WTC11 (cell line): ENCODE measurements at regions of chr3 and their contacts with region 1.

Region 1: GRCh38 chr3:123642182-123642956 is 57.5 kb upstream of the HACD2 start:
- DNase-seq: peak; percentile 92
- ATAC-seq: peak; percentile 99
- H3K4me3 Mint-ChIP-seq: no peak overlapping the region
- H3K27ac Mint-ChIP-seq: peak overlapping the region; percentile 84
- H3K4me1 Mint-ChIP-seq: peaks cover 33% of the 10 kb centered on the region
- H3K27me3 Mint-ChIP-seq: no peaks in the 10 kb centered on the region
- CTCF ChIP-seq: peak; percentile 90

Region 2: GRCh38 chr3:123571264-123571972 is 71.0 kb before region 1 on chr3:
- CTCF ChIA-PET with region 1: interaction called, 22 read pairs
- POLR2A ChIA-PET with region 1: no interaction called
- DNase-seq: peak; percentile 46
- ATAC-seq: peak; percentile 98
- H3K4me3 Mint-ChIP-seq: no peak overlapping the region
- H3K27ac Mint-ChIP-seq: peak overlapping the region; percentile 48; the same call in 1 of the 2 replicates
- H3K4me1 Mint-ChIP-seq: peaks cover 19% of the 10 kb centered on the region
- H3K27me3 Mint-ChIP-seq: no peaks in the 10 kb centered on the region
- CTCF ChIP-seq: no peak

Region 3: GRCh38 chr3:123618768-123619484 is 23.4 kb before region 1 on chr3:
- CTCF ChIA-PET with region 1: interaction called, 25 read pairs
- POLR2A ChIA-PET with region 1: no interaction called
- DNase-seq: no peak
- ATAC-seq: no peak
- H3K4me3 Mint-ChIP-seq: no peak overlapping the region
- H3K27ac Mint-ChIP-seq: no peak overlapping the region
- H3K4me1 Mint-ChIP-seq: peaks cover 25% of the 10 kb centered on the region
- H3K27me3 Mint-ChIP-seq: no peaks in the 10 kb centered on the region
- CTCF ChIP-seq: no peak

Region 4: GRCh38 chr3:123652346-123652984 is 10.1 kb after region 1 on chr3:
- CTCF ChIA-PET with region 1: interaction called, 108 read pairs
- POLR2A ChIA-PET with region 1: interaction called, 5 read pairs
- DNase-seq: peak; percentile 89
- ATAC-seq: peak; percentile 96
- H3K4me3 Mint-ChIP-seq: no peak overlapping the region
- H3K27ac Mint-ChIP-seq: 0 out of 2 replicates have a peak overlapping the region, but pooled peaks have one; percentile 14
- H3K4me1 Mint-ChIP-seq: peaks cover 19% of the 10 kb centered on the region
- H3K27me3 Mint-ChIP-seq: no peaks in the 10 kb centered on the region; the same call in 1 of the 2 replicates
- CTCF ChIP-seq: peak; percentile 66

Region 5: GRCh38 chr3:123700791-123701722 is 58.7 kb after region 1 on chr3:
- CTCF ChIA-PET with region 1: interaction called, 18 read pairs
- POLR2A ChIA-PET with region 1: no interaction called
- DNase-seq: no peak
- ATAC-seq: no peak
- H3K4me3 Mint-ChIP-seq: no peak overlapping the region
- H3K27ac Mint-ChIP-seq: no peak overlapping the region
- H3K4me1 Mint-ChIP-seq: peaks cover 6% of the 10 kb centered on the region
- H3K27me3 Mint-ChIP-seq: no peaks in the 10 kb centered on the region
- CTCF ChIP-seq: no peak

Region 6: GRCh38 chr3:123712077-123712860 is 69.9 kb after region 1 on chr3:
- CTCF ChIA-PET with region 1: interaction called, 19 read pairs
- POLR2A ChIA-PET with region 1: no interaction called
- DNase-seq: peak; percentile 23
- ATAC-seq: peak; percentile 78
- H3K4me3 Mint-ChIP-seq: no peak overlapping the region; the same call in 1 of the 2 replicates
- H3K27ac Mint-ChIP-seq: peak overlapping the region; percentile 21; the same call in 1 of the 2 replicates
- H3K4me1 Mint-ChIP-seq: peaks cover 15% of the 10 kb centered on the region
- H3K27me3 Mint-ChIP-seq: no peaks in the 10 kb centered on the region
- CTCF ChIP-seq: no peak